ENCODE measurements at regions of chr1 and their contacts with region 1.

Region 1: DNA sequence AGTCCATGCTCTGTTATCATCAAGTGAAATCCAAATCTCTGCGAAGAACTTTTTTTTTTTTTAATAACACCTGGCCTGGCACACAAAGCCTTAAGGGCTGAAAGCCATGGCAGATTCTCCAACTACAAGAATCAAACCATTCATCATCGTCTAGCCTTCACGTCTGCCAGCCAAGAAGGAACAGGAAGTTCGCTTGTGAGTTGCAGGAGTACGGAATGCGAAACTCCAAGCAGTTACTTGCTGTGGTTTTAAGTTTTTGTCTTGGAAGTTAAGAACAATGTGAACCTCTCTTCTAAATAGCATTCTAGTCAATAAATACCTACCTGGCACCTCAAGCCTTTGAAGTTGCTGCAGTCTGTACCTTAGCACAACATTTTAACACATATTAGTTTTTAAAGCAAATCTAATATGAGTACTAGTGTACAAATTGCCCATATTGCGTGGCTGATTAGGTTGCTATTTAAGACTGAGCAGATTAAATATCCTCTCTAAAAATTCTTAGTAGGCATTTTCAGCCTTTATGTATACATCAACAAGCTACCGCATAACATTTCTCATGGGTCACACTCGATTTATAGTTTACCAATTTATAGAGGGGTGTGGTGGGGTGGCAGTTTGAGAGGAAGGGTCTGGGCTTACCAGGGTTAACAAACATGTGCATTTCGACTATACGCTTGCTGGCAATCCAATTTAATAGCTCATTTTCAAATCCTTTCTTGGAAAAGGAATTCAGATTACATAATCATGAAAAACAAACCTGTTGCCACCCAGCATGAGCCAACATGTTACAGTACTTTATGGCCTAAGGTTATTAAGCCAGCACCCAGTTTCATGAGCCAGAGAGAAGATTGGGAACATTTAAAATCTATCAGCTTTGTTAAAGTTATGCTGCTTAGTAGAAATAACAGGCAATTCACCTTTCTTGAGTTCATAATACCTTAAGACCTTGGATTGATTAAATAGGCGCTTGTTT is 22.3 kb upstream of the PTPN14 start:
- DNase-seq: peak; percentile 97
- H3K4me3 Mint-ChIP-seq: peak overlapping the region; percentile 59
- H3K27ac Mint-ChIP-seq: peak overlapping the region; percentile 95
- H3K4me1 Mint-ChIP-seq: peaks cover 65% of the 10 kb centered on the region
- H3K27me3 Mint-ChIP-seq: no peaks in the 10 kb centered on the region
- CTCF ChIP-seq: no peak

Region 2: GRCh38 chr1:212847549-212847948 is 1726.1 kb before region 1 on chr1 and contains the start of gene SPATA45:
- CTCF ChIA-PET with region 1: no interaction called
- POLR2A ChIA-PET with region 1: no interaction called
- intact Hi-C with region 1: no loop called
- DNase-seq: no peak
- H3K4me3 Mint-ChIP-seq: no peak within 1 kb of the TSS
- H3K27ac Mint-ChIP-seq: no peak within 1 kb of the TSS
- H3K4me1 Mint-ChIP-seq: no peaks in the 10 kb centered on the region
- H3K27me3 Mint-ChIP-seq: no peaks in the 10 kb centered on the region
- CTCF ChIP-seq: no peak
- total RNA-seq, gene SPATA45: not detected in 2 replicates

Region 3: GRCh38 chr1:214386747-214387146 is 186.9 kb before region 1 on chr1:
- CTCF ChIA-PET with region 1: interaction called, 14 read pairs
- POLR2A ChIA-PET with region 1: interaction called, 33 read pairs
- intact Hi-C with region 1: no loop called
- DNase-seq: peak; percentile 83
- H3K4me3 Mint-ChIP-seq: no peak overlapping the region
- H3K27ac Mint-ChIP-seq: peak overlapping the region; percentile 76
- H3K4me1 Mint-ChIP-seq: peaks cover 14% of the 10 kb centered on the region
- H3K27me3 Mint-ChIP-seq: no peaks in the 10 kb centered on the region
- CTCF ChIP-seq: no peak

Region 4: GRCh38 chr1:214416417-214416816 is 157.3 kb before region 1 on chr1:
- CTCF ChIA-PET with region 1: no interaction called
- POLR2A ChIA-PET with region 1: interaction called, 69 read pairs
- intact Hi-C with region 1: no loop called
- DNase-seq: peak; percentile 80
- H3K4me3 Mint-ChIP-seq: no peak overlapping the region
- H3K27ac Mint-ChIP-seq: peak overlapping the region; percentile 69
- H3K4me1 Mint-ChIP-seq: peaks cover 67% of the 10 kb centered on the region
- H3K27me3 Mint-ChIP-seq: no peaks in the 10 kb centered on the region
- CTCF ChIP-seq: no peak

Region 5: GRCh38 chr1:214427871-214428277 is 145.8 kb before region 1 on chr1:
- CTCF ChIA-PET with region 1: interaction called, 4 read pairs
- POLR2A ChIA-PET with region 1: interaction called, 69 read pairs
- intact Hi-C with region 1: no loop called
- DNase-seq: peak; percentile 97
- H3K4me3 Mint-ChIP-seq: peak overlapping the region; percentile 15
- H3K27ac Mint-ChIP-seq: peak overlapping the region; percentile 82
- H3K4me1 Mint-ChIP-seq: peaks cover 63% of the 10 kb centered on the region
- H3K27me3 Mint-ChIP-seq: no peaks in the 10 kb centered on the region
- CTCF ChIP-seq: no peak

Region 6: DNA sequence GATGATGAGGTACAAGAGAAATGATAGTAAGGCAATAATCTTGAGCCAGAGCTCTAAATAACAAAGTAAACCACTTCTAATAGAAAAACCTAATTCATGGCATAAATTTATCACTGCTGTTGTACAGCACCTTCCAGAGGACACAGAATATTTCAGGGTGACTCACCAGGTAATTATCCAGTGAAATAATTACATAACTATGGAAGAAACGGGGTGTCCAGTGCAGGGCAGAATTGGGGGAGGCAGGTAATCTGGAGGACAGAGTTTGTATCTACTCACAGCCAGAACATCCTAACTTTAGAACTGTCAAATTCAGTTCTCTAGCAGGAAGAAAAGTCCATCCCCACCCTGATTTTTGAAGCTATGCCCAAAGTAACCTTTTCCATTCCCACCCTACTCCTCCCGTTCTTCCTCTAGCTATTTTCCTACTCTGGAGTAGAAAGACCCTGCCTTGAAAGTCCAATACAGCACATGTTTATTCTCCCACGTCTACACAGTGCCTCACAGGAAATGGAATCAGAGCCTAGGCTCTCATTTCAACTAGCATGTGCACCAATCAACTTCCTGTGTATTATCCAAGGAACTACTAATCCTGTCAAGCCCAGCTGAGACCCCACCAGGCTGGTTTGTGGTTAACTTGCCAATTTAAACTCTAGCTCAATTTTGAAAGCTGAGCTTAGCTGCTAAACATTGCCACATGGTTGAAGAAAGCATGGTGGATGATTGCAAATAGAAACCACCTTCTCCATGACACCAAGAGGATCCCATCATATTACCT is 118.9 kb before region 1 on chr1:
- CTCF ChIA-PET with region 1: interaction called, 5 read pairs
- POLR2A ChIA-PET with region 1: interaction called, 65 read pairs
- intact Hi-C with region 1: no loop called
- DNase-seq: peak; percentile 60
- H3K4me3 Mint-ChIP-seq: no peak overlapping the region
- H3K27ac Mint-ChIP-seq: peak overlapping the region; percentile 42
- H3K4me1 Mint-ChIP-seq: peaks cover 66% of the 10 kb centered on the region
- H3K27me3 Mint-ChIP-seq: no peaks in the 10 kb centered on the region
- CTCF ChIP-seq: no peak

Region 7: DNA sequence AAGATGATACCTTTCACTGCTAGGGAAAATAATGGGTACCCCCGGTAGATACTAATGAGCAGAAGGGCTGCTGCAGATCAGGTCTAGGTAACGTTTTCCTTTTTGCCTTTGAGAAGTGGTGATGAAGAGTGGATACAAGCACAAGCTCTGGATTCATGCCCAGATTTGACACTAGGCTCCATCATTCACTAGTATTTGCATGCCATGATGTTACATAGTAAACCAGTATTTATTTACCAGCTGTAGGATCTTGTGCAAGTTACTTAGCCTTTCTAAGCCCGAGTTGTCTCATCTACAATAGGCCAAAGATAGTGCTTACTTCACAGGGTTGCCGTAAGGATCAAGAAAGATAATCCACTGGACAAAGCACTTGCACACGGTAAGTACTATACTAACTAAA is 36.5 kb before region 1 on chr1:
- CTCF ChIA-PET with region 1: no interaction called
- POLR2A ChIA-PET with region 1: interaction called, 27 read pairs
- intact Hi-C with region 1: no loop called
- DNase-seq: peak; percentile 61
- H3K4me3 Mint-ChIP-seq: no peak overlapping the region
- H3K27ac Mint-ChIP-seq: no peak overlapping the region
- H3K4me1 Mint-ChIP-seq: peaks cover 47% of the 10 kb centered on the region
- H3K27me3 Mint-ChIP-seq: no peaks in the 10 kb centered on the region
- CTCF ChIP-seq: no peak

Region 8: DNA sequence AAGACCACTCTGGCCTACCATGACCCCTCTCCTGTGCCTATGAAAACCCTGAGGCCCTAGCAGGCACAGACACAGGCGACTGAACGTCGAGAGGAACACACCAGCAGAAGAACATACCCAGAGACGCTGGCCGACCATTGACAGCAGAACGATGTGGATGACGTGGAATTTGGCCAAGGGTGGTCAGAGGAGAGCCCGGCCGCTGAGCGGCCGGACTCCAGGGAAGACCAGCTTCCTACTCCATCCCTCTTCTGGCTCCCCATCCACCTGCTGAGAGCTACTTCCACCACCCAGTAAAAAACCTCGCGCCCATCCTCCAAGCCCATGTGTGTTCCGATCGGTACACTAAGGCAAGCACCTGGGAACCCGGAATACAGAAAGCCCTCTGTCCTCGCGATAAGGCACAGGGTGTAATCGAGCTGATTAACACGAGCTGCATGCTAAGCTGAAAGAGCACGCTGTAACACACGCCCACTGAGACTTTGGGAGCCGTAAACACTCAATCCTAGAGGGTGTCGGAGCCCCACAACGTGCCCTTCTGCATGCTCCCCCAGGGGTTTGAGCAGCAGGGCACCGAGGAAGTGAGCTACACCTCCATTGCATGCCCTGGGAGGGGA is 179.7 kb after region 1 on chr1:
- CTCF ChIA-PET with region 1: no interaction called
- POLR2A ChIA-PET with region 1: no interaction called
- intact Hi-C with region 1: no loop called
- DNase-seq: no peak
- H3K4me3 Mint-ChIP-seq: no peak overlapping the region
- H3K27ac Mint-ChIP-seq: no peak overlapping the region
- H3K4me1 Mint-ChIP-seq: no peaks in the 10 kb centered on the region
- H3K27me3 Mint-ChIP-seq: no peaks in the 10 kb centered on the region
- CTCF ChIP-seq: no peak